ENCODE measurements at regions of chr2 and their contacts with region 1.

Region 1: GRCh38 chr2:238024986-238025385 is 35.8 kb upstream of the SCLY start:
- DNase-seq: peak; percentile 33
- H3K4me3 Mint-ChIP-seq: peak overlapping the region; percentile 66
- H3K27ac Mint-ChIP-seq: peak overlapping the region; percentile 86
- H3K4me1 Mint-ChIP-seq: peaks cover 38% of the 10 kb centered on the region
- H3K27me3 Mint-ChIP-seq: no peaks in the 10 kb centered on the region

Region 2: DNA sequence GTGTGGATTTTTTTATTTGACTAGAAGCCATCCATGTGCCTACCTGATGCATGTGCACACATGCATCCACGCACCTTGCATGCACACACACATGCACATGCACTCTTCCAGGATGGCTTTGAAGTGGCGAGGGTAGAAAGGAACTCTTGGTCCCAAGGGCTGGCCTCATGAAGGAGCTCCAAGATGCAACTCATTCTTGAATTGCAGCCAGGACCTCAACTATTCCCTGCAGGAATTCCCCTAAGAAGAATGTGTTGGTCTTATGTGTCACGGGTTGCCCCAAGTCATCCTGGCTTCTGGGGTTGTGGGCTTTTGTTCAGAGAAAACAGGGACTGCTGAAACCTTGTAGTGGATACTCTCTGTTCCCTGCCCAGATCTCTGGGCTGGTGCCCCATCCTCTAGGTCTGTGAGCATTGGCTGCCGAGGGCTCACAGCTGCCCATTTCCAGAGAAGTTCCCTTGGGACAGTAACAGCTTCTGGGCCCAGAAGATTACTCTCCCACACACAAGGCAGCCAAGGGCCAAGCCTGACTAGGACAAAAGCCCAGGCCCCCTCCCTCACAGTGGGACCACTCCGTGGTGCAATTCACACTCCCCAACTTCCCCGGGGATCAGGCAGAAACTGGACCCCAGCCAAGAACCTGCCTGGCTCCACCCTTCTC is 801.7 kb before region 1 on chr2:
- intact Hi-C with region 1: no loop called
- DNase-seq: no peak
- H3K4me3 Mint-ChIP-seq: no peak overlapping the region
- H3K27ac Mint-ChIP-seq: no peak overlapping the region
- H3K4me1 Mint-ChIP-seq: peaks cover 18% of the 10 kb centered on the region
- H3K27me3 Mint-ChIP-seq: peaks cover 31% of the 10 kb centered on the region

Region 3: DNA sequence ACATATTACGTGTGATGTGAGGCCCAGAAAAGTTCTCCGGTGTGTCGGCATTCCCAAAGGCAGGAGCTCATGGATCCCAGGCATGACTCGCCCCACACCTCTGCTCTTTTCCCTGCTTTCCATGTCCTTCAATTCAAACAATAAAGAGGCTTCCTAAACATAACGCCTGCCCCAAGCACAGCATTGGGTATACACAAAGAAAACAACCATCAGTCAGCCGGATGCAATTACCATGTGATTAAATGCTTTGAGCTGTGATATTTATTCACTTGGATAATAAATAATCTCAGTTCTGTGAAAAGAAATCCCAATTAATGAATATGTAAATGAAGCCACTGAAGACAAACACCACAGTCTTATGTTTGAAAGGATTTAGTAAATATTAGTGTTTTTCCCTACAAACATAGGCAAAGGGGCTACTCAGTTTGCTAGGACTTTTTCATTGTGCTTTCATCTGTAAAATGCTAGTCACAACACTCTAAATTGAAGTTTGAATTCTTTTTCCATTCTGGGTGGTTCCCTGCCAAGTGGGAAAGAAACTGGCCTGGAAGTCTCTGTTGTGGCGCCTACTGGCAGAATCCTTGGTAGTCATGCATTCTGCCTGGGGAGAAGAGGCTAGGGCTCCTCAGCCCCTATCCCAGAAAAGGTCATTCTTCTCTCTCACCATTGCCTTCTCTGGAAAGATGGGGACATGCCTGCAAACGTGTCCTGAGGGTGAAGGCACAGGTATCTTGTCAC is 755.7 kb before region 1 on chr2:
- intact Hi-C with region 1: no loop called
- DNase-seq: no peak
- H3K4me3 Mint-ChIP-seq: no peak overlapping the region
- H3K27ac Mint-ChIP-seq: no peak overlapping the region
- H3K4me1 Mint-ChIP-seq: no peaks in the 10 kb centered on the region
- H3K27me3 Mint-ChIP-seq: peaks cover 8% of the 10 kb centered on the region

Region 4: GRCh38 chr2:237980751-237981150 is 44.2 kb before region 1 on chr2:
- intact Hi-C with region 1: loop called (anchors 5 kb)
- DNase-seq: peak; percentile 25
- H3K4me3 Mint-ChIP-seq: peak overlapping the region; percentile 37
- H3K27ac Mint-ChIP-seq: peak overlapping the region; percentile 94
- H3K4me1 Mint-ChIP-seq: peaks cover 72% of the 10 kb centered on the region
- H3K27me3 Mint-ChIP-seq: no peaks in the 10 kb centered on the region

Region 5: GRCh38 chr2:238009563-238009962 is 15.4 kb before region 1 on chr2:
- intact Hi-C with region 1: loop called (anchors 1 kb)
- DNase-seq: no peak
- H3K4me3 Mint-ChIP-seq: peak overlapping the region; percentile 78
- H3K27ac Mint-ChIP-seq: peak overlapping the region; percentile 99
- H3K4me1 Mint-ChIP-seq: peaks cover 59% of the 10 kb centered on the region
- H3K27me3 Mint-ChIP-seq: no peaks in the 10 kb centered on the region

Measured in activated T-helper 2 cell treated with anti-CD3 and anti-CD28 coated beads, Interferon-gamma antibody, Interleukin-2, Interleukin-4, amounts not matched to agents 10 μg/mL and 5 μg/mL and 100 μg/mL, durations not matched to agents 14 hours and 24 hours and 36 hours (primary cell).